ENCODE measurements at regions of chr3 and their contacts with region 1.

Region 1: DNA sequence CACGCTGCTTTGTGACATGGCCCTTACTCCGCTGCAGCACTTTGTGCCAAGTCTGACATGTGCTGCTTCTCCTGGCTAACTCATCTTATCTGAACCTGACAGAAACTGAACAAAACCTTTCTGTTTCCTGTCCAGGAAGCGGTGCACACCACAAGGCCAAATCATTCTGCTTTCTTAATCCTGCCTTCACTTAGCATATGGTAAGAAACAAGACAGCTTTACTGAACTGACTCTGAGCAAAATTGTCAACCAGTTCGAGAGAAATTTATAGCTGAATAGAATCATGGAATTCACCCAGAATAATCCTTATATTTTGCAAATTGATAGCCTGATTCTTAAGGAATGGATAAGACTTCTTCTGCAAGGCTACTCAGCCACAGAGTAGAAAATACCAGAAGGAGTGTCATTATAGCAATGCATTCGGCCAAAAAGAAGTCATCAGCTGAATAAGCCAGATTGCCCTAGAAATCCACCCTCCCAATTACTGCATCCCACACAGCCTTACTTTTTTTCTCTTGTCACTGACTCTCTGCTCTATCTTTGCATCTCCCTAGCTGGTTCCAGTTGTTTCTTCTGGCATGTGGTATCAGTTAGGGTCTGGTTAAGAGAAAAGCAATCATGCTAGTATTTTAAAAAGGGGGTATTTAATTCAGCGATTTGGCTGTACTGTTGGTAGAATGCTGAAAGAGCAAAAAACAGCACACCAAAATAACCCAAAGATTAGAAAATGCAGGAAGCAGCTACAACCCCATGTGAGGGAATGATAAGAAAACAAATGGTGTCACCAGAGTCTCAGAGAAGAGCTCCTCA is 41.6 kb upstream of the STRIT1 start:
- DNase-seq: peak; percentile 12
- CTCF ChIP-seq: no peak

Region 2: GRCh38 chr3:154334973-154335420 is 1000.1 kb before region 1 on chr3:
- in situ Hi-C with region 1: loop called (anchors 25 kb)
- DNase-seq: peak; percentile 18
- CTCF ChIP-seq: peak; percentile 47

Region 3: DNA sequence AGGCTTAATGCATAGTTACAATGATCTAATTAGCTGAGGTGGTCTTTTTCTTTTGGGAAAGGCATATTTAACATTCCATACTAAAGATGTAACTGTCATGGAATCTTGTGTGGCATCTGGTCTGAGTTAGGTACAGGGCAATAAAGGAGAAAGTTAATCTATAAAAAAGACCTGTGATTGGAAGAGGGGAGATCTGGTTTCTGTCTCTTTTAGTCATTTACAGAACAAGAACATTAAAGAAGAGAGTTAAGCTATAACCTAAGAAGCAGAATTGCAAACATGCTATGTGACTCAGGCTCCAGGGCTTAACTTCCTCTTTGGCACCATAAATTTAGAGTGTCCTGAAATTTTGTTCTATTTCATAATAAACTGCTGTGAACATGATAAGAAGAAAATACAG is 302.2 kb before region 1 on chr3:
- in situ Hi-C with region 1: no loop called
- DNase-seq: no peak
- CTCF ChIP-seq: no peak

Region 4: GRCh38 chr3:155730847-155731246 is 395.7 kb after region 1 on chr3:
- in situ Hi-C with region 1: no loop called
- DNase-seq: no peak
- CTCF ChIP-seq: no peak

Region 5: GRCh38 chr3:156341831-156342416 is 1006.8 kb after region 1 on chr3:
- in situ Hi-C with region 1: no loop called
- DNase-seq: peak; percentile 50
- CTCF ChIP-seq: peak; percentile 48